B cell (primary cell): ENCODE measurements at regions of chr15 and their contacts with region 1.

Region 1: GRCh38 chr15:46301291-46301690 is 666.5 kb downstream of the SQOR start:
- DNase-seq: no peak
- ATAC-seq: no peak
- H3K4me3 ChIP-seq: no peak overlapping the region
- H3K4me3 Mint-ChIP-seq: no peak overlapping the region
- H3K27ac ChIP-seq: no peak overlapping the region
- H3K27ac Mint-ChIP-seq: no peak overlapping the region
- H3K4me1 ChIP-seq: no peaks in the 10 kb centered on the region
- H3K4me1 Mint-ChIP-seq: peaks cover 6% of the 10 kb centered on the region
- H3K27me3 ChIP-seq: no peaks in the 10 kb centered on the region
- H3K27me3 Mint-ChIP-seq: no peaks in the 10 kb centered on the region
- CTCF ChIP-seq: no peak

Region 2: GRCh38 chr15:46260937-46261336 is 40.4 kb before region 1 on chr15:
- CTCF ChIA-PET with region 1: no interaction called
- POLR2A ChIA-PET with region 1: no interaction called
- intact Hi-C with region 1: no loop called
- DNase-seq: no peak
- ATAC-seq: no peak
- H3K4me3 ChIP-seq: no peak overlapping the region
- H3K4me3 Mint-ChIP-seq: no peak overlapping the region
- H3K27ac ChIP-seq: no peak overlapping the region
- H3K27ac Mint-ChIP-seq: no peak overlapping the region
- H3K4me1 ChIP-seq: no peaks in the 10 kb centered on the region
- H3K4me1 Mint-ChIP-seq: no peaks in the 10 kb centered on the region
- H3K27me3 ChIP-seq: no peaks in the 10 kb centered on the region
- H3K27me3 Mint-ChIP-seq: no peaks in the 10 kb centered on the region
- CTCF ChIP-seq: no peak

Region 3: DNA sequence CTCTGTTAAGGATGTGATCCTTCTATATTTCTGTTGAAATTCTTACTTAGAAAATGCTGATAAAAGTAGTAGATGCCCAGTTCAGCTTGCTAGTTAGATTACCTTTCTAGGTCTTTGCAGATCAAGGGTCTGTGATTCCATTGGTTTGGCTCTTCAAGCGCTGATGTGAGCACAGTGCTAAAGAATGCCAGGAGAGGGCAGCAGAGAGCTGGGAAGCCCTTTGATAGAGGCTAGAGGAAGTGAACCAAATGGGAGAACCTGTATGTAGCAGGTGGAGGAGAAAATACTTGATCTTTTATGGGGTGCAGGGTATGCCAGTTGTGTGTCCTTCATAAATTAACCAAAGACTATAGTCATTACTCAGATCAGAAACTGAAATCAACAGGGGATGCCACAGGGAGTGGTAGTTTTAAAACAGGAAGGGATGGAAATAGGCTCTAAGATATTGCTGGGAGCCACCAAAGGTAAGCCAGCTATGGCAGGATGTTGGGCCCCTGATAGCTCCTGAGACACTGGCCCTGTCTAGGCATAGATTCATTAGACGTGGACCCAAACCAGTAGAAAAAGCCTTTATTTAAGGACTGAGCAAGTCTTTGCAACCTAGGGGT is 10.9 kb after region 1 on chr15:
- CTCF ChIA-PET with region 1: interaction called, 10 read pairs
- POLR2A ChIA-PET with region 1: no interaction called
- intact Hi-C with region 1: no loop called
- DNase-seq: peak; percentile 54
- ATAC-seq: peak; percentile 45
- H3K4me3 ChIP-seq: no peak overlapping the region
- H3K4me3 Mint-ChIP-seq: no peak overlapping the region
- H3K27ac ChIP-seq: no peak overlapping the region
- H3K27ac Mint-ChIP-seq: no peak overlapping the region
- H3K4me1 ChIP-seq: no peaks in the 10 kb centered on the region
- H3K4me1 Mint-ChIP-seq: no peaks in the 10 kb centered on the region
- H3K27me3 ChIP-seq: no peaks in the 10 kb centered on the region
- H3K27me3 Mint-ChIP-seq: no peaks in the 10 kb centered on the region
- CTCF ChIP-seq: peak; percentile 84

Region 4: DNA sequence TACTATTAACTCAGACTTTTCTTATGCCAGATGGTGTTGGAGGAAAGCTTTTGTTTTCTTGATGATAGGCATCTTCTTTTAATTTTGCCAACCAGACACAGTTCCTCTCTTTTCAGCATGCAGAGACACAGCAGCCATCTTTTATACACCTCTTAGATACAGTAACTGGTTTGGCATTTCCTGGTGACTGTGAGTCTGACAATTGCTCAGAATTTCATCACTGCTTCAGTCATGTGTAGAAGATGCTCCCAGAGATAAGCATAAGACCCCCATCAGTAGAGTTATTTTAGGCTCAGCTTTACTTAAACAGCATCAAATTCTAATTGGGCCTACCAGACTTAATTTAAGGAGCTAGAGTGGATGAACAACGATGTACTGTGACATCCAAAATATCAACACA is 112.5 kb after region 1 on chr15:
- CTCF ChIA-PET with region 1: no interaction called
- POLR2A ChIA-PET with region 1: no interaction called
- intact Hi-C with region 1: no loop called
- DNase-seq: no peak
- ATAC-seq: no peak
- H3K4me3 ChIP-seq: no peak overlapping the region
- H3K4me3 Mint-ChIP-seq: no peak overlapping the region
- H3K27ac ChIP-seq: no peak overlapping the region
- H3K27ac Mint-ChIP-seq: no peak overlapping the region
- H3K4me1 ChIP-seq: no peaks in the 10 kb centered on the region
- H3K4me1 Mint-ChIP-seq: no peaks in the 10 kb centered on the region
- H3K27me3 ChIP-seq: no peaks in the 10 kb centered on the region
- H3K27me3 Mint-ChIP-seq: no peaks in the 10 kb centered on the region
- CTCF ChIP-seq: no peak